HEK293 (cell line): ENCODE measurements at regions of chr5 and their contacts with region 1.

Region 1: DNA sequence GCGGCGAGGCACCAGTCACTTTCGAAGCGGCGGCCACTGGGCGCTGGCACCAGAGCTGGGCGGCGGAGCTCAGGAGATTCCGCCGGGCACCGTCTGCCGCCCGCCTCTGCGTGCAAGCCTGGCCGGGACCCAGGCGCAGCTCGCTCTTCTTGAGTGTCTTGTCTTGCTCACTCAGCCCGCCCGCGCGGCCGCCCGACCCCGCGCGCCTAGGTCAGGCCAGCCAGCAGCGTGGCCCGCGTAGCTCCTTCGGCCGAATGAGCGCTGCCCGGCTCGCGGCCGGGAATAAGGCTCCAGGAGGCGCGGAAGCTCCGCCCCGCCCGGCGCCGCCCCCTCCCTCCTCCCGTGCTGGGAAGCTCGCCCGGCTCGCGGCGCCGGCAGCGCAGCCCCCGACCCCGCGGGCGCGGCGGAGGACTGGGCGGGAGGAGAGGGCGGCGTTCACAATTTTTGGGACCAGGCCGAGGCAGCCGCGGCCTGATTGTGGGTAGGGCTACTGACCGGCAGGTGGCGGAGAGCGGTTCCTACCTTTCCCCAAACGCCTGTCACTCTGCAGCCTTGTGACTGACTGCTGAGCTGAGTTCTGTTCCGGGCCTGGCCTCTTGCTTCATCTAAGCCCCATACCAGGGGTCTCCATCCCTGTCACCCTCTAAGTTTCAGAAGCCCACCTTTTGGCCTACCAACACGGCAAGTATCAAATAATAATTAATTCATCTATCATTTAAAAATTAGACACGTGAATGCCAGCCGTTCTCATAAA is at the start of gene HBEGF:
- H3K4me3 ChIP-seq: peak within 1 kb of the TSS; percentile 68
- H3K27ac ChIP-seq: peak within 1 kb of the TSS; percentile 53; the same call in 1 of the 2 replicates
- H3K4me1 ChIP-seq: no peaks in the 10 kb centered on the region
- CTCF ChIP-seq: peak; percentile 4; the same call in 1 of the 2 replicates

Region 2: GRCh38 chr5:140253947-140254346 is 92.6 kb before region 1 on chr5:
- CTCF ChIA-PET with region 1: interaction called, 660 read pairs
- POLR2A ChIA-PET with region 1: interaction called, 8 read pairs
- H3K4me3 ChIP-seq: no peak overlapping the region
- H3K27ac ChIP-seq: no peak overlapping the region
- H3K4me1 ChIP-seq: no peaks in the 10 kb centered on the region
- CTCF ChIP-seq: no peak

Region 3: DNA sequence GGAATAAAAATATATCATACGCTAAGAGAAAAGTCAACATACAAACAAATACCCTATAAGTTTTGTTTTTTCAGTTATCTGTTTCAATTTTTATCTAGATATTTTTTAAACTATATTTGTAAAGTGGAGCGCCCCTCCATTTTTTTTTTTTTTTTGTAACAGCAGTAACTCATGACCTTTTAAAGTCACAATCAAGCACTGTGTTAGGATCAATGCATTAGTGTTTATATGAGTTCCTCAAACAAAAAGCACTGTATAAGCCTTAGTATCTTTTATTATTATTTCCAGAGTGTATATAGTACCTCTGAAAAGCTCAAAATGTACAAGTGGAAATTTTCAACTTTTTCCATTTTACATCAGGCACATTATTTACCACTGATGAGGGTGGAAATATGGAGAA is 64.3 kb before region 1 on chr5:
- CTCF ChIA-PET with region 1: interaction called, 6 read pairs
- POLR2A ChIA-PET with region 1: interaction called, 10 read pairs
- H3K4me3 ChIP-seq: no peak overlapping the region
- H3K27ac ChIP-seq: no peak overlapping the region
- H3K4me1 ChIP-seq: 0 out of 2 replicates have a peak, but pooled peaks cover 2% of the 10 kb centered on the region
- CTCF ChIP-seq: no peak

Region 4: GRCh38 chr5:140302786-140303639 is 43.5 kb before region 1 on chr5 and contains the start of gene PFDN1:
- CTCF ChIA-PET with region 1: interaction called, 27 read pairs
- POLR2A ChIA-PET with region 1: interaction called, 37 read pairs
- H3K4me3 ChIP-seq: peak within 1 kb of the TSS; percentile 70
- H3K27ac ChIP-seq: peak within 1 kb of the TSS; percentile 48; the same call in 1 of the 2 replicates
- H3K4me1 ChIP-seq: peaks cover 21% of the 10 kb centered on the region
- CTCF ChIP-seq: no peak

Region 5: DNA sequence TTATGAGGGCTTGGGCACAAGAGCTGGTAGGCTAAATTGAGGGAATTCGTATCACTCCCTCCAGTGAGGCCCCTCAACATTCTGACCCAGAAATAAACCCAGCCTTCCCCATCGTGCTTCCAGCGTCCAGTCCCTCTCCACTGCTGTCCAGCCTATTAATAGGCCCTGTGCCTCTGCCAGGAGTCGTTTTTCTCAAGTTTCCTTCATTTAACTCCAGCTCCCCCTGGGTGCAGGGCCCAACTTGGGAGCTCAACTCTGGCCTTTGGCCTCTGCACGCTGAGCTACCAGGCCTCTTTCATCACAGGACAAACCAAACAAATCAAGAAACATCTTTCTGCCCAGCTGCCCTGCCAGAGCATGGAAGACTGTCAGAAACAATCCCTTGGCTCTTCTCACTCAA is 10.1 kb before region 1 on chr5:
- CTCF ChIA-PET with region 1: interaction called, 26 read pairs
- POLR2A ChIA-PET with region 1: interaction called, 9 read pairs
- H3K4me3 ChIP-seq: no peak overlapping the region
- H3K27ac ChIP-seq: no peak overlapping the region
- H3K4me1 ChIP-seq: no peaks in the 10 kb centered on the region
- CTCF ChIP-seq: no peak

Region 6: GRCh38 chr5:140362860-140363630 is 16.5 kb after region 1 on chr5:
- CTCF ChIA-PET with region 1: interaction called, 88 read pairs
- POLR2A ChIA-PET with region 1: interaction called, 11 read pairs
- H3K4me3 ChIP-seq: peak overlapping the region; percentile 33
- H3K27ac ChIP-seq: no peak overlapping the region; the same call in 1 of the 2 replicates
- H3K4me1 ChIP-seq: no peaks in the 10 kb centered on the region
- CTCF ChIP-seq: peak; percentile 94